CD4-positive, alpha-beta T cell (primary cell): ENCODE measurements at regions of chr12 and their contacts with region 1.

Region 1: GRCh38 chr12:123278101-123278627 is 6.5 kb upstream of the CDK2AP1 start:
- DNase-seq: peak in 3 of 14 experiments; percentile 24 to 35 (median 34)
- ATAC-seq: no peak
- H3K4me3 ChIP-seq: no peak overlapping the region
- H3K4me3 Mint-ChIP-seq: no peak overlapping the region
- H3K27ac ChIP-seq: no peak overlapping the region
- H3K27ac Mint-ChIP-seq: no peak overlapping the region
- H3K4me1 ChIP-seq: no peaks in the 10 kb centered on the region
- H3K4me1 Mint-ChIP-seq: no peaks in the 10 kb centered on the region
- H3K27me3 ChIP-seq: no peaks in the 10 kb centered on the region
- H3K27me3 Mint-ChIP-seq: no peaks in the 10 kb centered on the region
- CTCF ChIP-seq: no peak

Region 2: GRCh38 chr12:123329799-123330198 is 51.6 kb after region 1 on chr12:
- CTCF ChIA-PET with region 1: no interaction called
- POLR2A ChIA-PET with region 1: no interaction called
- intact Hi-C with region 1: loop called in 1 of 2 experiments (anchors 5 kb)
- DNase-seq: no peak
- ATAC-seq: no peak
- H3K4me3 ChIP-seq: no peak overlapping the region
- H3K4me3 Mint-ChIP-seq: no peak overlapping the region
- H3K27ac ChIP-seq: no peak overlapping the region
- H3K27ac Mint-ChIP-seq: no peak overlapping the region
- H3K4me1 ChIP-seq: no peaks in the 10 kb centered on the region
- H3K4me1 Mint-ChIP-seq: no peaks in the 10 kb centered on the region
- H3K27me3 ChIP-seq: no peaks in the 10 kb centered on the region
- H3K27me3 Mint-ChIP-seq: no peaks in the 10 kb centered on the region
- CTCF ChIP-seq: no peak

Region 3: GRCh38 chr12:124545508-124546418 is 1267.6 kb after region 1 on chr12:
- CTCF ChIA-PET with region 1: no interaction called
- POLR2A ChIA-PET with region 1: no interaction called
- intact Hi-C with region 1: no loop called
- DNase-seq: peak in 5 of 14 experiments; percentile 18 to 68 (median 44)
- ATAC-seq: peak; percentile 54
- H3K4me3 ChIP-seq: peak overlapping the region; percentile 27
- H3K4me3 Mint-ChIP-seq: peak overlapping the region; percentile 48
- H3K27ac ChIP-seq: no peak overlapping the region
- H3K27ac Mint-ChIP-seq: peak overlapping the region; percentile 44
- H3K4me1 ChIP-seq: peaks cover 75% of the 10 kb centered on the region
- H3K4me1 Mint-ChIP-seq: peaks cover 66% of the 10 kb centered on the region
- H3K27me3 ChIP-seq: no peaks in the 10 kb centered on the region
- H3K27me3 Mint-ChIP-seq: no peaks in the 10 kb centered on the region
- CTCF ChIP-seq: no peak